PC-9 (cell line): ENCODE measurements at regions of chr2 and their contacts with region 1.

Region 1: DNA sequence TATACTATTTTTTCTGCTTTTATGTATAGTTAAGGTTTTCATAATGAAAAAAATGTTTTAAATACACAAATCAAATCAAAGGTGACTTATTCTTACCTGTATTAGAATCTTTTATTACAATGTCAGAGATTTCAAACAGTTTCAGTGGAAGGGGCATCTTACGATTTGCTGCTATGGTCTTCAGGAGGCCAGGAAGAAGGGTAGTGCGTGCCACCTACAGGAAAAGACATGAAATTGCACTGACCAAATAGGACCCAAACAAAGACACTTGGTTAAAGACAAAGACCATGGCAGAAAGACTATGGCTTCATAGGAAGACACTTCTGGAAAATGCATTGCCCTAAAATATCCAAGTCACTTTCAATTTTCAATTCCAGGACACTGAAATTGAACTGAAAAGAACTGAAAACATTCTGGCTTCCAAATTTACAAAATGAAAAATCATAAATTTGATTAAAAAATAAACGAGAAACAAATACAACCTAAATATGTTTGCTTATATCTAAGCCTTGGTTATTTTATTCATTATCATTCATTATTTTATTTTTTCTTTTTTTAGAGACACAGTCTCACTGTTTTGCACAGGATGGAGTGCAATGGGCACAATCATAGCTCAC is 42.1 kb downstream of the FARSB start:
- DNase-seq: peak; percentile 25 to 61
- H3K4me3 ChIP-seq: no peak overlapping the region
- H3K27ac ChIP-seq: no peak overlapping the region
- H3K4me1 ChIP-seq: no peaks in the 10 kb centered on the region
- H3K27me3 ChIP-seq: no peaks in the 10 kb centered on the region
- CTCF ChIP-seq: peak; percentile 99

Region 2: GRCh38 chr2:222024932-222025880 is 588.6 kb before region 1 on chr2:
- CTCF ChIA-PET with region 1: interaction called, 3 read pairs
- POLR2A ChIA-PET with region 1: no interaction called
- intact Hi-C with region 1: loop called (anchors 1 kb)
- DNase-seq: peak; percentile 15 to 62
- H3K4me3 ChIP-seq: no peak overlapping the region
- H3K27ac ChIP-seq: no peak overlapping the region
- H3K4me1 ChIP-seq: no peaks in the 10 kb centered on the region
- H3K27me3 ChIP-seq: no peaks in the 10 kb centered on the region
- CTCF ChIP-seq: peak; percentile 96

Region 3: DNA sequence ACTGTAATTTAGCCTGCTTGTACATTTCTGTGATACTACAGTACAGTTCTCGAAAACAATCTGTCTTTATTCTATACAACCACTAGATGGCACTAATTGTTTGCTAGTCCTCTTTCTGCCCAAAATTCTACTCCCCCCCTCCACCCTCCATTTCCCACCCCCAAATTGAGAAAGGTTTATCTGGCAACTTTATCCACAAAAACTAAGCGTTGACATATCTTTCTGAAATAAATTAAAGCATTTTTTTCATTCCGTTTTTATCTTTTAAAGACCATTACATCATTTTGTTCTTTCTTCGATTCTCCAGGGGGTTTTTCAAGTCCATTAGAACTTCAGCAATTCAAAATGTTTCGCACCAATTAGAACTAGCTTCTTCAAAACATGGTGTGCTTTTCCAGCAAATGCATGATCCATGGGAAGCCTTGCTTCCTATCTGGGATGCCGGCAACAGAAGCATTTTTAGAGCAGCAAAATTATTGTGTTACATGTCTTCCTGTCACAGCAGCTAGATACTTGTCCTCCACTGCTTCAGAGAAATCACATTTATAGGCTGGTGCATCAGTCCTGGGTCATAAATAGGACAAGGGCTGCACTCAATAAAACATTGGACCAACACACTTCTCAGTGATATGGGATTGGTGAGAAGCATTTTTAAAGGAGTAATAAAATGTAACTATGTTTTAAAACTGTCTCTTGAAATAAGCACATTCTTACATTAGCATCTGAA is 556.3 kb before region 1 on chr2:
- CTCF ChIA-PET with region 1: interaction called, 3 read pairs
- POLR2A ChIA-PET with region 1: no interaction called
- intact Hi-C with region 1: loop called (anchors 1 kb)
- DNase-seq: no peak
- H3K4me3 ChIP-seq: no peak overlapping the region
- H3K27ac ChIP-seq: no peak overlapping the region
- H3K4me1 ChIP-seq: no peaks in the 10 kb centered on the region
- H3K27me3 ChIP-seq: peaks cover 9% of the 10 kb centered on the region
- CTCF ChIP-seq: peak; percentile 98

Region 4: DNA sequence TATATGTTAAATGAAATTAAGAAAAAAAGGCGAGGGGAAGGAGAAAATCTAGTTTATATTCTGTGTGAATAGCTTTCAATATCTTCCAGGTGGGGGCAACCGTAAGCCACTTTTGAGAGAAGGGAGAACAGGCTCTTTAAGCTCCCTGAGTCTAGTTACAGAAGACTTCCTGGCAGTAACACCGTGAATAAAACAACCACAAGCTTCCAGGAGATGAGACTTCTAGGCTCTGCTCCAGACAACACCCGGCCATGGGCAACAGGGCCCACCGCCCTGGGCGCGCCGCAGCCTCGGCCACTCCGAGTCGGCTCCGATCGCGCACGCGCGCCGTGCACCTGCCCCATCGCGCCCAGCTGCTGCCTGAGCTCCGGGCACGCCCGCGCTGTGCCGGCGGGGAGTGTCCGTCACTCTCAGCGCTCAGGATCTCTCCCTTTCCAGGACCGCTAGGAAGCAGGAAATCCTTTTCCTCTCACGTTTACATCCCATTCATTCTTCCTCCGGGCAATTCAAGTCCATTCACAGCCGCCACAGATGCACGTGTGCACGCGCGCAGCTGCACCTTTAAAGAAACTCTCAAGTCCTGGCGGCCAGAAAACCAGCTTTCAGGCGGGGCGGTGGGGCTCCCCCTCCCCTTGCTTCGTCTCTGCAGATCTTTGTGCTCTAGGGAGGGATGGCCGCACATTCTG is 295.7 kb before region 1 on chr2:
- CTCF ChIA-PET with region 1: interaction called, 5 read pairs
- POLR2A ChIA-PET with region 1: no interaction called
- intact Hi-C with region 1: loop called (anchors 1 kb)
- DNase-seq: peak; percentile 74 to 89
- H3K4me3 ChIP-seq: peak overlapping the region; percentile 79
- H3K27ac ChIP-seq: no peak overlapping the region
- H3K4me1 ChIP-seq: peaks cover 5% of the 10 kb centered on the region; the same call in 1 of the 2 replicates
- H3K27me3 ChIP-seq: peaks cover 13% of the 10 kb centered on the region; the same call in 1 of the 2 replicates
- CTCF ChIP-seq: peak; percentile 87

Region 5: GRCh38 chr2:222483513-222484039 is 130.2 kb before region 1 on chr2:
- CTCF ChIA-PET with region 1: no interaction called
- POLR2A ChIA-PET with region 1: no interaction called
- intact Hi-C with region 1: loop called (anchors 1 kb)
- DNase-seq: peak in 1 of 2 experiments; percentile 26
- H3K4me3 ChIP-seq: no peak overlapping the region
- H3K27ac ChIP-seq: no peak overlapping the region
- H3K4me1 ChIP-seq: no peaks in the 10 kb centered on the region
- H3K27me3 ChIP-seq: no peaks in the 10 kb centered on the region
- CTCF ChIP-seq: peak; percentile 35

Region 6: GRCh38 chr2:222594679-222595078 is 19.1 kb before region 1 on chr2:
- CTCF ChIA-PET with region 1: interaction called, 10 read pairs
- POLR2A ChIA-PET with region 1: interaction called, 21 read pairs
- intact Hi-C with region 1: no loop called
- DNase-seq: peak in 1 of 2 experiments; percentile 48
- H3K4me3 ChIP-seq: no peak overlapping the region
- H3K27ac ChIP-seq: no peak overlapping the region
- H3K4me1 ChIP-seq: 0 out of 2 replicates have a peak, but pooled peaks cover 7% of the 10 kb centered on the region
- H3K27me3 ChIP-seq: no peaks in the 10 kb centered on the region
- CTCF ChIP-seq: no peak

Region 7: GRCh38 chr2:222776792-222777191 is 163.0 kb after region 1 on chr2:
- CTCF ChIA-PET with region 1: no interaction called
- POLR2A ChIA-PET with region 1: no interaction called
- intact Hi-C with region 1: no loop called
- DNase-seq: no peak
- H3K4me3 ChIP-seq: no peak overlapping the region
- H3K27ac ChIP-seq: no peak overlapping the region
- H3K4me1 ChIP-seq: peaks cover 20% of the 10 kb centered on the region
- H3K27me3 ChIP-seq: no peaks in the 10 kb centered on the region
- CTCF ChIP-seq: no peak